HepG2 (cell line): ENCODE measurements at regions of chr7 and their contacts with region 1.

Region 1: GRCh38 chr7:4129481-4130122 is 552.5 kb upstream of the FOXK1 start:
- DNase-seq: no peak
- ATAC-seq: no peak
- H3K4me3 ChIP-seq: no peak overlapping the region
- H3K27ac ChIP-seq: no peak overlapping the region
- H3K4me1 ChIP-seq: peaks cover 15% of the 10 kb centered on the region
- H3K27me3 ChIP-seq: no peaks in the 10 kb centered on the region
- CTCF ChIP-seq: no peak
- EP300 ChIP-seq: no peak
- POLR2A ChIP-seq: no peak
- RAD21 ChIP-seq: no peak

Region 2: GRCh38 chr7:3754488-3755341 is 374.9 kb before region 1 on chr7:
- CTCF ChIA-PET with region 1: no interaction called
- POLR2A ChIA-PET with region 1: no interaction called
- in situ Hi-C with region 1: no loop called
- intact Hi-C with region 1: loop called (anchors 5 kb)
- DNase-seq: no peak
- ATAC-seq: no peak
- H3K4me3 ChIP-seq: no peak overlapping the region
- H3K27ac ChIP-seq: no peak overlapping the region
- H3K4me1 ChIP-seq: no peaks in the 10 kb centered on the region
- H3K27me3 ChIP-seq: no peaks in the 10 kb centered on the region
- CTCF ChIP-seq: no peak
- EP300 ChIP-seq: no peak
- POLR2A ChIP-seq: no peak
- RAD21 ChIP-seq: no peak

Region 3: GRCh38 chr7:4177001-4177400 is 47.4 kb after region 1 on chr7:
- CTCF ChIA-PET with region 1: no interaction called
- POLR2A ChIA-PET with region 1: no interaction called
- in situ Hi-C with region 1: no loop called
- intact Hi-C with region 1: no loop called
- DNase-seq: no peak
- ATAC-seq: no peak
- H3K4me3 ChIP-seq: no peak overlapping the region
- H3K27ac ChIP-seq: no peak overlapping the region
- H3K4me1 ChIP-seq: no peaks in the 10 kb centered on the region
- H3K27me3 ChIP-seq: no peaks in the 10 kb centered on the region
- CTCF ChIP-seq: no peak
- EP300 ChIP-seq: no peak
- POLR2A ChIP-seq: no peak
- RAD21 ChIP-seq: no peak

Region 4: GRCh38 chr7:4434306-4434705 is 304.7 kb after region 1 on chr7:
- CTCF ChIA-PET with region 1: no interaction called
- POLR2A ChIA-PET with region 1: no interaction called
- in situ Hi-C with region 1: no loop called
- intact Hi-C with region 1: no loop called
- DNase-seq: no peak
- ATAC-seq: no peak
- H3K4me3 ChIP-seq: no peak overlapping the region
- H3K27ac ChIP-seq: no peak overlapping the region
- H3K4me1 ChIP-seq: peaks cover 18% of the 10 kb centered on the region
- H3K27me3 ChIP-seq: peaks cover 1 to 26% of the 10 kb centered on the region in 2 experiments; a peak in 2 of 5 replicates
- CTCF ChIP-seq: no peak
- EP300 ChIP-seq: no peak
- POLR2A ChIP-seq: no peak
- RAD21 ChIP-seq: no peak